H1 (cell line): ENCODE measurements at regions of chr7 and their contacts with region 1.

Region 1: GRCh38 chr7:92766461-92767003 is 69.8 kb downstream of the CDK6 start:
- DNase-seq: no peak
- H3K4me3 ChIP-seq: no peak overlapping the region
- H3K27ac ChIP-seq: no peak overlapping the region
- H3K4me1 ChIP-seq: peaks cover 0 to 39% (median 20%) of the 10 kb centered on the region in 4 experiments; a peak in 4 of 7 replicates
- H3K27me3 ChIP-seq: no peaks in the 10 kb centered on the region
- CTCF ChIP-seq: no peak
- EP300 ChIP-seq: no peak
- POLR2A ChIP-seq: no peak
- RAD21 ChIP-seq: no peak

Region 2: GRCh38 chr7:92754919-92755581 is 11.5 kb before region 1 on chr7:
- CTCF ChIA-PET with region 1: interaction called, 5 read pairs
- POLR2A ChIA-PET with region 1: interaction called, 14 read pairs
- DNase-seq: no peak
- H3K4me3 ChIP-seq: no peak overlapping the region
- H3K27ac ChIP-seq: no peak overlapping the region
- H3K4me1 ChIP-seq: peaks cover 3 to 22% (median 16%) of the 10 kb centered on the region in 4 experiments
- H3K27me3 ChIP-seq: no peaks in the 10 kb centered on the region
- CTCF ChIP-seq: no peak
- EP300 ChIP-seq: no peak
- POLR2A ChIP-seq: no peak
- RAD21 ChIP-seq: no peak

Region 3: DNA sequence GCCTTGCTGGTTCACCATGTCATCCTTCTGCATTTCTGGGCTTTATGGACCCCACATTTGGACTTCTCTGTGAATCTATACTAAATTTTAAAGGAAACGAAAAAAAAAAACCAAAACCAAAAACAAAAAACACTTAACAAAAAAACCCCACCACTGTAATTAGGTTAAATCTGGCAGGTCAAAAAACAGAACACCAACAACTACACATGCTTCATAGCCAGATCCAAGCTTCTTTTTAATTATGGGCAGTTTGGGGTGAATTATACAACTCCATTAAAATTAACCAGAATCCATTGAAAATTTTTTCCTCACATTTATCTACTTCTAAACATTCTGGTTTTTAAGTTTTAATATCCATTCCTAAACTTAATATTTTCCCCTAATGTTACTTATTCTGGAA is 11.5 kb after region 1 on chr7:
- CTCF ChIA-PET with region 1: no interaction called
- POLR2A ChIA-PET with region 1: no interaction called
- DNase-seq: no peak
- H3K4me3 ChIP-seq: no peak overlapping the region
- H3K27ac ChIP-seq: no peak overlapping the region
- H3K4me1 ChIP-seq: no peaks in the 10 kb centered on the region
- H3K27me3 ChIP-seq: no peaks in the 10 kb centered on the region
- CTCF ChIP-seq: no peak
- EP300 ChIP-seq: no peak
- POLR2A ChIP-seq: no peak
- RAD21 ChIP-seq: no peak

Region 4: DNA sequence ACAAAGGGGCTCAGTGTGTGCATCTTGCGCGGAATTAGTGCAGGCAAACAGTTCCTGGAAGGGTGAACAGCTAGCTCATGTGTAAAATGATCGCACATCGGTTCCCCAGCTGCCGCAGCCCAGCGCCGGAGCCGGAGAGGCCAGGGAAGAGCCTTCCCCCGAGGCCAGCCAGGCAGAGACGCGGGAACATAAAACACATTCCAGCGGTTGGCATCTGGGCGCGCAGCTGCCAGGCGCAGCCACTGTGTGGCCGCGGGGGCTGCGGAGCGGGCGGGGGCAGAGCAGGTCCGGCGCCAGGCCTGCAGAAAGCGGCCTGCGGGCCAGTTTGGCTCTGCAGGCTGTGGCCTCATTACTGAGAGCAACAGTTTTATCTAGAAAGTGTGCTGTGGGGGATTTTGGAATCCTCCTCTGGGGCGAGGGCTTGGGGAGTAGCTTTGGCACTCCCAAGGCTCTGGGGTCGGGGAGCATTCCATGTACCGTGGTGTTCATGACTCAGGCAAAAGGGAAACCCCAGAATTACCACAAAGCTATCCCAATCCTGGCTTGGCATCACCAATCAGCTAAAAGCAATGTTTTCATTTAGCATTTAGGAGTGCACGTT is 277.0 kb after region 1 on chr7:
- CTCF ChIA-PET with region 1: no interaction called
- POLR2A ChIA-PET with region 1: no interaction called
- DNase-seq: peak in 1 of 2 experiments; percentile 74
- H3K4me3 ChIP-seq: peak overlapping the region; percentile 50 to 65 (median 52)
- H3K27ac ChIP-seq: no peak overlapping the region
- H3K4me1 ChIP-seq: peaks cover 6 to 25% (median 14%) of the 10 kb centered on the region in 4 experiments
- H3K27me3 ChIP-seq: peaks cover 2 to 16% (median 10%) of the 10 kb centered on the region in 4 experiments; a peak in 5 of 7 replicates
- CTCF ChIP-seq: no peak
- EP300 ChIP-seq: no peak
- POLR2A ChIP-seq: no peak
- RAD21 ChIP-seq: no peak; a peak in 1 of 4 replicates